ENCODE measurements at regions of chr19 and their contacts with region 1.

Region 1: GRCh38 chr19:6801485-6802086 is 29.1 kb downstream of the VAV1 start:
- DNase-seq: peak; percentile 91
- ATAC-seq: peak; percentile 79
- H3K4me3 Mint-ChIP-seq: peak overlapping the region; percentile 84
- H3K27ac Mint-ChIP-seq: peak overlapping the region; percentile 97
- H3K4me1 Mint-ChIP-seq: peaks cover 60% of the 10 kb centered on the region
- H3K27me3 Mint-ChIP-seq: no peaks in the 10 kb centered on the region

Region 2: GRCh38 chr19:6752257-6753177 is 49.1 kb before region 1 on chr19:
- CTCF ChIA-PET with region 1: no interaction called
- POLR2A ChIA-PET with region 1: no interaction called
- DNase-seq: no peak
- ATAC-seq: no peak
- H3K4me3 Mint-ChIP-seq: peak overlapping the region; percentile 64
- H3K27ac Mint-ChIP-seq: peak overlapping the region; percentile 86
- H3K4me1 Mint-ChIP-seq: peaks cover 13% of the 10 kb centered on the region
- H3K27me3 Mint-ChIP-seq: no peaks in the 10 kb centered on the region

Region 3: DNA sequence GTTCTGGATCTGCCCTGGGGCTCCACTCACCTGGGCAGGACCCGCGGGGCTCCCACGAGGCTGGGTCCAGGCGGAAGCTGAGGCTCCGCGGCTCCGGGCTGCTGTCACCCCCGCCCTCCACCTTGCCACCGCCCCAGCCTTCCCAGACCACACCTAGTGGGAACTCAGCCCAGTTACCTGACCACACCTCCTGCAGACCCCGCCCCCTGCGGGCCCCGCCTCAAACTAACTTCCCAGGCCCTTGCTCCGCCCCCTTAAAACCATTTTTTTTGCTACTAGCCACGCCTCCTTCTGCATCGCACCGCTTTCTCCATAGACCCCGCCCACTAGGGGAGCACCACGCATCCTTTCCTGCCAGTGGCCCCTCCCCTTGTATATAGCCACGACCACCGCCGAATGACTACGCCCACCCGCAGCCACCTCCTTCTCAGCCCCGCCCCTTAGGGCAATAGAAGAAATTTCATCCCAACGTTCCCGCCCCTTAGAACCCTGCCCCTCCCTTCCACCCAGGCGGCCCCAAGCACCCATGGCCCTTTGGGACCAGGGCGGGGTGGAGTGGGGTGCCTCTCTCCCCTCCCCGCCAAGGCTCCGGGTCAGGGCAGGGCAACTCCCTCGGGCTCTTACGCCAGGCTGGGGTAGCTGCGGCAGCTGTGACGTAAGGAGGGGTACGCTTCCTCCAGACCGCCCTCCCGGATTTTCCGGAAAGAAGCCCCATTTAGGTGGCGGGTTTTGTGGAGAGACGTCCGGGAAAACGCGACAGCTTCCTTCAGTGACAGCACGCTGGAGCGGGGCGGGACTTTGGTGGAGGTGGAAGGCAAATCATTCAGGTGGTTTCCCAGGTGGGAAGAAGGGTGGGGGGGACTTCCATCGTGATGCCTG is 34.0 kb before region 1 on chr19 and contains the start of gene SH2D3A:
- CTCF ChIA-PET with region 1: interaction called, 49 read pairs
- POLR2A ChIA-PET with region 1: interaction called, 19 read pairs
- DNase-seq: peak; percentile 97
- ATAC-seq: peak; percentile 79
- H3K4me3 Mint-ChIP-seq: peak within 1 kb of the TSS; percentile 88
- H3K27ac Mint-ChIP-seq: peak within 1 kb of the TSS; percentile 91
- H3K4me1 Mint-ChIP-seq: peaks cover 60% of the 10 kb centered on the region
- H3K27me3 Mint-ChIP-seq: no peaks in the 10 kb centered on the region
- total RNA-seq, gene SH2D3A: 28.2 to 28.5 TPM

Region 4: GRCh38 chr19:6790194-6791128 is 11.1 kb before region 1 on chr19:
- CTCF ChIA-PET with region 1: interaction called, 3 read pairs
- POLR2A ChIA-PET with region 1: interaction called, 14 read pairs
- DNase-seq: no peak
- ATAC-seq: no peak
- H3K4me3 Mint-ChIP-seq: no peak overlapping the region
- H3K27ac Mint-ChIP-seq: peak overlapping the region; percentile 72
- H3K4me1 Mint-ChIP-seq: peaks cover 61% of the 10 kb centered on the region
- H3K27me3 Mint-ChIP-seq: no peaks in the 10 kb centered on the region

Region 5: GRCh38 chr19:6811906-6812305 is 10.3 kb after region 1 on chr19:
- CTCF ChIA-PET with region 1: interaction called, 26 read pairs
- POLR2A ChIA-PET with region 1: interaction called, 4 read pairs
- DNase-seq: no peak
- ATAC-seq: no peak
- H3K4me3 Mint-ChIP-seq: no peak overlapping the region
- H3K27ac Mint-ChIP-seq: peak overlapping the region; percentile 16
- H3K4me1 Mint-ChIP-seq: peaks cover 64% of the 10 kb centered on the region
- H3K27me3 Mint-ChIP-seq: no peaks in the 10 kb centered on the region

Region 6: GRCh38 chr19:6873708-6874431 is 72.3 kb after region 1 on chr19:
- CTCF ChIA-PET with region 1: no interaction called
- POLR2A ChIA-PET with region 1: no interaction called
- DNase-seq: no peak
- ATAC-seq: no peak
- H3K4me3 Mint-ChIP-seq: no peak overlapping the region
- H3K27ac Mint-ChIP-seq: no peak overlapping the region
- H3K4me1 Mint-ChIP-seq: peaks cover 5% of the 10 kb centered on the region
- H3K27me3 Mint-ChIP-seq: no peaks in the 10 kb centered on the region

Measured in activated CD8-positive, alpha-beta T cell treated with anti-CD3 and anti-CD28 coated beads, Interleukin-2, amount 10 ng/mL, durations not matched to agents 7 days and 5 days (primary cell).